ENCODE measurements at regions of chr9 and their contacts with region 1.

Region 1: GRCh38 chr9:114385412-114386181 is 2.2 kb downstream of the AKNA start:
- DNase-seq: peak; percentile 54
- ATAC-seq: peak; percentile 57
- H3K4me3 ChIP-seq: peak overlapping the region in 2 of 3 experiments; percentile 21 to 68; a peak in 2 of 6 replicates
- H3K27ac ChIP-seq: peak overlapping the region; percentile 48
- H3K4me1 ChIP-seq: peaks cover 47% of the 10 kb centered on the region
- H3K27me3 ChIP-seq: no peaks in the 10 kb centered on the region
- CTCF ChIP-seq: no peak
- EP300 ChIP-seq: peak in 1 of 2 experiments; percentile 8; a peak in 1 of 4 replicates
- POLR2A ChIP-seq: no peak
- RAD21 ChIP-seq: no peak

Region 2: GRCh38 chr9:114339130-114339908 is 46.3 kb before region 1 on chr9:
- CTCF ChIA-PET with region 1: no interaction called
- POLR2A ChIA-PET with region 1: no interaction called
- in situ Hi-C with region 1: no loop called
- intact Hi-C with region 1: loop called (anchors 5 kb)
- DNase-seq: peak; percentile 35
- ATAC-seq: peak; percentile 84
- H3K4me3 ChIP-seq: no peak overlapping the region
- H3K27ac ChIP-seq: no peak overlapping the region
- H3K4me1 ChIP-seq: peaks cover 9% of the 10 kb centered on the region
- H3K27me3 ChIP-seq: no peaks in the 10 kb centered on the region
- CTCF ChIP-seq: peak; percentile 83
- EP300 ChIP-seq: no peak
- POLR2A ChIP-seq: no peak
- RAD21 ChIP-seq: peak; percentile 84

Region 3: GRCh38 chr9:114397848-114398605 is 12.4 kb after region 1 on chr9:
- CTCF ChIA-PET with region 1: no interaction called
- POLR2A ChIA-PET with region 1: interaction called, 24 read pairs
- in situ Hi-C with region 1: no loop called
- intact Hi-C with region 1: no loop called
- DNase-seq: peak; percentile 85
- ATAC-seq: peak; percentile 85
- H3K4me3 ChIP-seq: peak overlapping the region; percentile 74 to 85 (median 76)
- H3K27ac ChIP-seq: peak overlapping the region; percentile 55
- H3K4me1 ChIP-seq: peaks cover 53% of the 10 kb centered on the region
- H3K27me3 ChIP-seq: no peaks in the 10 kb centered on the region
- CTCF ChIP-seq: peak; percentile 17; the same call in 1 of the 2 replicates
- EP300 ChIP-seq: no peak
- POLR2A ChIP-seq: 0 out of 4 replicates have a peak, but pooled peaks of 1 of the 2 experiments have one; percentile 15
- RAD21 ChIP-seq: 0 out of 2 replicates have a peak, but pooled peaks have one; percentile 29

Measured in HepG2 (cell line).